ENCODE measurements at regions of chr17 and their contacts with region 1.

Region 1: DNA sequence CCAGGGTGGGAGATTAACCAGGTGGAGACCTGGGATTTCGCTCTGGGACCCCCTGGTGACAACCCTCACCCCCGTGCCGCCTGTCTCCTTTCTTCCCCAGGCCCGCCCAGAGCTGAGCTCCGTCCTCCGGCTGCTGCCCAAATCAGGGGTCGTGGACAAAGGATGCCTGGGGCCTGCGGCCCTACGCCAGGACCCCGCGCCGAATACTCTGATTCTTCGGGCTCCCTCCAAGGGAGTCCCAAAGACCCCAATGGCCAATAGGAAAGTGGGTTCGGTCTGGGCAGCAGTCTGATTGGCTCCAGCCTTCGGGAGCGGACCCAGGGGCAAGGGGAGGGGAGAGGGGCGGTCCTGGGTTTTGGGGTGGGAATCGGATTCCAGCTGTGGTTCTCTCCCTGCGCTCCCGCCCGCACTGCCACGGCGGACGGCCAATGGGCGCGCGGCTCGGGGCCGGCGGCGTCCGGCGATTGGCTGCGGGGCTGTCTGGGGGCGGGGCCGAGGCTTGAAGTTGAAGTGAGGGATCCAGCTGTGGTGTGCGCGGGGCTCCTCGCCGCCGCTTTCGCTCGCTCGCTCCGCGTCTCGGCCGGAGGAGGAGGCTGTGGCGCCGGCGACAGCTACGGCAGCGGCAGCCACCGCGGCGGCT is at the start of gene CACNA1G:
- DNase-seq: peak; percentile 98
- H3K4me3 ChIP-seq: peak within 1 kb of the TSS; percentile 58 to 73 (median 62)
- H3K27ac ChIP-seq: no peak within 1 kb of the TSS
- H3K4me1 ChIP-seq: peaks cover 41 to 61% (median 56%) of the 10 kb centered on the region in 4 donors
- H3K27me3 ChIP-seq: peaks cover 3 to 96% (median 50%) of the 10 kb centered on the region in 4 donors
- CTCF ChIP-seq: no peak
- EP300 ChIP-seq: no peak
- POLR2A ChIP-seq: no peak
- total RNA-seq, gene CACNA1G: 0.39 to 0.63 (median 0.50) TPM in 3 of 4 donors, not detected in the other

Region 2: DNA sequence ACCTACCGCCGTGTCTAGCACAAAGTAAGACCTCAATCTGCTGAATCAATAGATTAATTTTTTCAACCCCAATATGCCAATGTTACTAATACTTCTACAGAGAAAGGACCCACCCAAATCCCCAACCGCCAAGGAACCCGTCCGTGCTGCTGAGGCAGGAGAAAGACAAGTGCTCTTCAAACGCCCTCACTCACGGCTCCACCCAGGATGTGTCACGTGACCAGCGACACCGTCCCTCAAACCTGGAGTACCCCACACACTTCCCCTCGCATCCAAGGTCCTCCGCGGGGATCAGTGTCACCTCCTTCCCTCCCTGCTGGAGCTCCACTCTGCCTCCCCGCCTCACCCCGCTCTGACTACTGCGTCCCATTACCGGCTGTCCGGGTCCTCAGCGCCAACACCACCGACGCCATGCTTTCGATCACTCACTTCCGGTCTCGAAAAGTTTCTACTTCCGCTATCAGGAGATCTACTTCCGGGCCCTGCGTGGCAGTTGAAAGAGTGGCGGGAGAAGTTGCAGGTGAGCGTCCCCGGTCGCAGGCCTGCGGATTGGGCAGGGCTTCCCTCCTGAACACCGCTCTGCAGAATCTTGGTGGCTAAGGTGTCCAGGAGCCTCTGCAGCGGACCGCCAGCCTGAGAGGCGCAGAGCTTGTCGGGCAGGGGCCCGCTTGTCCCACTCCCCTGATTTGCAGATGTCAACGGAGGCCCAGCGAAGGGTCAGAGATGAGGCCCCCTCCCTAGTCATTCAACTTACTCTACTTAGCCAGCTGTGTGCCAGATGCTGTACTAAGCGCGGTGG is 187.3 kb before region 1 on chr17 and contains the starts of genes EME1 and MRPL27:
- intact Hi-C with region 1: no loop called
- DNase-seq: peak; percentile 97
- H3K4me3 ChIP-seq: peak within 1 kb of the TSS; percentile 83 to 89 (median 84)
- H3K27ac ChIP-seq: peak within 1 kb of the TSS; percentile 90 to 96 (median 93)
- H3K4me1 ChIP-seq: peaks cover 22 to 31% (median 25%) of the 10 kb centered on the region in 4 donors
- H3K27me3 ChIP-seq: no peaks in the 10 kb centered on the region
- CTCF ChIP-seq: no peak
- EP300 ChIP-seq: no peak
- POLR2A ChIP-seq: peak; percentile 20
- total RNA-seq, gene EME1: not detected
- total RNA-seq, gene MRPL27: 33.6 to 58.8 (median 48.1) TPM

Region 3: GRCh38 chr17:50640701-50641351 is 80.5 kb after region 1 on chr17:
- intact Hi-C with region 1: no loop called
- DNase-seq: no peak
- H3K4me3 ChIP-seq: no peak overlapping the region
- H3K27ac ChIP-seq: no peak overlapping the region
- H3K4me1 ChIP-seq: peaks cover 15 to 37% (median 34%) of the 10 kb centered on the region in 4 donors
- H3K27me3 ChIP-seq: peaks cover 0 to 21% (median under 1%) of the 10 kb centered on the region in 4 donors
- CTCF ChIP-seq: no peak
- EP300 ChIP-seq: no peak
- POLR2A ChIP-seq: no peak

Region 4: DNA sequence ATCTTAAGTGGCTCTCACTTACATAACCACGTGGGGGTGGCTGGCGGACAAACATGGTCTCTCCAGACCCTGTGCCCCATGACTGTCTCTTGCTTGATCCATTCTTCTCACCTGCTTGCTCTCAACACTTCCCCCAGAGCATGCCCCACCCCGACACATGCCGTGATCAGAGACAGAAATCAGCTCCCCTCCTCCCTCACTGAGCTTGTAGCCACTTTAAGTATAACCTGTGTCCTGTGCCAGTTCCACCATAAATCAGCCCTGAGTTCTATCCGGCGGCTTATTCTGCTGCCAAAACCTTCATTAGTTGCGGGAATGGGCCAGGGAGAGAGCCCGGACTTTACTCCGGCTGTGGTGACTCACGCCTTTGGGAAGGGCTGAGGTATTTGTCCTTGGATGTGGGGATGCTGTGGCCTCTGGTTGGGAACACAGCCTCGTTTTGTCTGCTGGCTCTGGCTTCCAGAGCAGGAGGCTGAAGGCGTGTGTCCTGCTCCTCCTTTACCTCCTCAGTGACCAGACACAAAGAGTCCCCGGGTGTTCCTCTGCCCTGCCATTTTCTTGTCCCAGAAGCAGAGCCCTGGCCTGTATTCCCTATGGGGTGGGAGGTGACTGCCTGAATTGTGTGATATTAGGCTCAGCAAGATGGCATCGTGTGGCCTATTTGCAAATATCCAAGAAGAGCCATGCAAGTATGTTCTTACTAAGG is 126.3 kb after region 1 on chr17:
- intact Hi-C with region 1: loop called (anchors 5 kb)
- DNase-seq: peak; percentile 93
- H3K4me3 ChIP-seq: no peak overlapping the region
- H3K27ac ChIP-seq: peak overlapping the region; percentile 68 to 88 (median 81)
- H3K4me1 ChIP-seq: peaks cover 17 to 56% (median 52%) of the 10 kb centered on the region in 4 donors
- H3K27me3 ChIP-seq: no peaks in the 10 kb centered on the region
- CTCF ChIP-seq: no peak
- EP300 ChIP-seq: peak; percentile 4
- POLR2A ChIP-seq: no peak